ENCODE measurements at regions of chr5 and their contacts with region 1.

Region 1: GRCh38 chr5:135191084-135191826 is 157.2 kb upstream of the PITX1 start:
- DNase-seq: peak; percentile 90
- H3K4me3 ChIP-seq: peak overlapping the region; percentile 50 to 53
- H3K27ac ChIP-seq: no peak overlapping the region
- H3K4me1 ChIP-seq: peaks cover 0 to 7% of the 10 kb centered on the region in 2 experiments; a peak in 1 of 4 replicates
- H3K27me3 ChIP-seq: no peaks in the 10 kb centered on the region
- CTCF ChIP-seq: peak; percentile 78
- EP300 ChIP-seq: no peak
- RAD21 ChIP-seq: peak; percentile 89

Region 2: DNA sequence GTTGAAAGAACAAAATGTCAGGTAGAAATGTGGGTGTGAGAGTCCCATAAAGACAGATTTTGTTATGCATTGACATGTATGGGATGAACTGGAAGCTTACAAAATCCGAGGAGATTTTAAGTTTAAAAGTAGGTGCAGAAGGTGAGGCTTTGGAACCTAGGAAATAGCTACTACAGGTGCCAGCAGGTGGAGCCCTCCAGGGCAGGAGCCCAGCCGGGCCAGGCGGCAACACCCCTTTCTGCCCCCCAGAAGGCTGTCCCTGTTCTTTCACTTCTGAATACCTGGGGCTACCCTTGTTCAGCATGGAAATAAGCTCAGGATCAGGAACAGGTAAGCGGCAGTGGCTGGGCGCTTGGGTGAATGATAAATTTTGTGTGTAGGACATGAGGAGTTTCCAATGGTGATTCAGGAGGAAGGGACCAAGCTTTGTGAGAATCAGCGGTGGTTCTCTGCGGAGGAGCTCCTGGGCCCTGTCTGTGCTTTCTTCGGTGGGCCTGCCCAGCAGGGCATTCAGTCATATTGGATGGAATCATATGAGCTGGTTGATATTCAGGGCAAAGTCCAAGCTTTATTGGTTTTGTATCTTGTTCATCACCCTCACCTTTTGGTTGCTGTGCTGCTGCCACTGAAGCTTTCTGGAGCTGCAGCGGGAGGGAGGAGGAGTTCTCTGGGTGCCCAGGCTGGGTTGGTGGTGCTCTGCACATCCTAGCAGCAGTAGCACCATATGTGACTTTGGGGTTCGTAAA is 274.0 kb before region 1 on chr5:
- CTCF ChIA-PET with region 1: interaction called, 14 read pairs
- POLR2A ChIA-PET with region 1: no interaction called
- DNase-seq: no peak
- H3K4me3 ChIP-seq: no peak overlapping the region
- H3K27ac ChIP-seq: no peak overlapping the region
- H3K4me1 ChIP-seq: peaks cover 0 to 3% of the 10 kb centered on the region in 2 experiments; a peak in 1 of 4 replicates
- H3K27me3 ChIP-seq: no peaks in the 10 kb centered on the region
- CTCF ChIP-seq: peak; percentile 32
- EP300 ChIP-seq: no peak
- RAD21 ChIP-seq: peak; percentile 30; the same call in 1 of the 2 replicates

Region 3: GRCh38 chr5:135034236-135034962 is 156.9 kb before region 1 on chr5:
- CTCF ChIA-PET with region 1: interaction called, 32 read pairs
- POLR2A ChIA-PET with region 1: no interaction called
- DNase-seq: peak; percentile 70
- H3K4me3 ChIP-seq: no peak overlapping the region
- H3K27ac ChIP-seq: no peak overlapping the region
- H3K4me1 ChIP-seq: peaks cover 0 to 11% of the 10 kb centered on the region in 2 experiments; a peak in 1 of 4 replicates
- H3K27me3 ChIP-seq: peaks cover 90% of the 10 kb centered on the region
- CTCF ChIP-seq: no peak
- EP300 ChIP-seq: no peak
- RAD21 ChIP-seq: no peak

Region 4: GRCh38 chr5:135039271-135040045 is 151.8 kb before region 1 on chr5:
- CTCF ChIA-PET with region 1: interaction called, 32 read pairs
- POLR2A ChIA-PET with region 1: no interaction called
- DNase-seq: peak; percentile 71
- H3K4me3 ChIP-seq: no peak overlapping the region
- H3K27ac ChIP-seq: no peak overlapping the region
- H3K4me1 ChIP-seq: no peaks in the 10 kb centered on the region; a peak in 1 of 4 replicates
- H3K27me3 ChIP-seq: peaks cover 96% of the 10 kb centered on the region
- CTCF ChIP-seq: no peak
- EP300 ChIP-seq: no peak
- RAD21 ChIP-seq: no peak

Region 5: DNA sequence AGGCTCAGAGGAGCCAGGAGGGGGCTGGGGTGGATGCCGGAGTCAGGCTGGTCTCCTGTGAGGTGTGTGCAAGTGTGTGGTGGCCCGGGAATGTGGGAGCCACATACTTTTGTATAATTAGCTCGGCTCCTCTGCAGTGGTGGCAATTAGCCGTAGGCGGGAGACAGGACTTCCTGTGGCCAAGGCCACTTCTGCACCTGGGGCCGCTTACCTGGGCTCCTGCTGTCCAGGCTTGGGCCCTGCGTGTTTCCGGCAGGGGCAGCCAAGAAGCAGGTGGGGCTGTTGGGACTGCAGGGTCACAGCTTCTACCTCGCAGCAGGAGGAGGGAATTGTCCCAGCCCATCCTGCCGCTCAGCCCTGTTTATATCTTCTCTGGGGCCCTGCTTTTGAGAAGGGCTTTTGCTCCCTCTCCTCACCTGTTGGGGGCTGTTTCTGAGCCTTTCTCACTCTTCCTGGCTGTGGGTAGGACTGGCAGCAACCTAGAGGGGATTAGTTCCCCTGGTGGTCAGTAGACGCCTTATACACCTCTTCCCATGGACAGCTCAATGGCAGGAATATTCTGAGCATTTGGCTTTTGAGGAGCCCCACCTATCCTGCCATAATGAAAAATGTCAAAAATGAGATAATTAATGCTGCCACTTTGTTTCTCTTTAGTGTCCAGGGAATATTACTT is 11.8 kb before region 1 on chr5:
- CTCF ChIA-PET with region 1: interaction called, 29 read pairs
- POLR2A ChIA-PET with region 1: no interaction called
- DNase-seq: no peak
- H3K4me3 ChIP-seq: no peak overlapping the region
- H3K27ac ChIP-seq: no peak overlapping the region
- H3K4me1 ChIP-seq: no peaks in the 10 kb centered on the region
- H3K27me3 ChIP-seq: no peaks in the 10 kb centered on the region; the same call in 1 of the 2 replicates
- CTCF ChIP-seq: no peak
- EP300 ChIP-seq: no peak
- RAD21 ChIP-seq: no peak

Region 6: GRCh38 chr5:135203593-135204036 is 12.4 kb after region 1 on chr5:
- CTCF ChIA-PET with region 1: interaction called, 26 read pairs
- POLR2A ChIA-PET with region 1: no interaction called
- DNase-seq: no peak
- H3K4me3 ChIP-seq: no peak overlapping the region
- H3K27ac ChIP-seq: no peak overlapping the region
- H3K4me1 ChIP-seq: 0 out of 4 replicates have a peak, but pooled peaks cover 0 to 8% of the 10 kb centered on the region in 2 experiments
- H3K27me3 ChIP-seq: no peaks in the 10 kb centered on the region
- CTCF ChIP-seq: peak; percentile 51
- EP300 ChIP-seq: no peak
- RAD21 ChIP-seq: peak; percentile 57

Region 7: DNA sequence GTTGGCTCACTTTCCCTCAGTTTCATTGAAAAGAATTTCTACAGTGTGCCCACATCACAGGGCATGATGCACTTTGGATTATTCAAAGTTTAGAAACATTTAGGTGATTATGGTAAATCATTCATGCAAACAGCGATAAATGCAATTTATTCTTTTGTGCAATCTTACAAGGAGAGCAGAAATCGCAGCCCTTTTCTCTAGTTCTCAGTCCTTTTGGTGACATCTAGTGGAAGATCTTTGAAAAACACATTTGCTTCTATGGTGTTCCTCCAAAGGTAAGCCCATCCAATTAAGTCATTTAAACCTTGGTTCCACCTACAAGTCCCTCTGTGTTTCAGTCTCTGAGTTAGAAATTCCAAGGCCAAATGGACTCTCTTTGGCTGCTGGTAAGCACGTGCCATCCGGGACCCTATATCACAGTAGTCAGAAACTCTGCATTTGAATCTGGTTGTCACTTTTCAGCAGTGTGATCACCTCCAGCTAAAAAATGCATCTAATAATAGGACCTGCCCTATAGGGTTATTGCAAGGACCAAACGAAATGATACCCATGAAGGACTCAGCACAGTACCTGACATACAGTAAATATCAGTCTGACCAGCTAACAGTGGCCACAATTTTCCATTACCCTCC is 141.4 kb after region 1 on chr5:
- CTCF ChIA-PET with region 1: interaction called, 10 read pairs
- POLR2A ChIA-PET with region 1: no interaction called
- DNase-seq: peak; percentile 66
- H3K4me3 ChIP-seq: no peak overlapping the region
- H3K27ac ChIP-seq: no peak overlapping the region
- H3K4me1 ChIP-seq: peaks cover 0 to 23% of the 10 kb centered on the region in 2 experiments; a peak in 3 of 4 replicates
- H3K27me3 ChIP-seq: no peaks in the 10 kb centered on the region
- CTCF ChIP-seq: peak; percentile 72
- EP300 ChIP-seq: no peak
- RAD21 ChIP-seq: peak; percentile 84